Activated naive CD4-positive, alpha-beta T cell treated with anti-CD3 and anti-CD28 coated beads, Interleukin-2, amount 10 ng/mL, durations not matched to agents 7 days and 5 days (primary cell): ENCODE measurements at regions of chr21 and their contacts with region 1.

Region 1: DNA sequence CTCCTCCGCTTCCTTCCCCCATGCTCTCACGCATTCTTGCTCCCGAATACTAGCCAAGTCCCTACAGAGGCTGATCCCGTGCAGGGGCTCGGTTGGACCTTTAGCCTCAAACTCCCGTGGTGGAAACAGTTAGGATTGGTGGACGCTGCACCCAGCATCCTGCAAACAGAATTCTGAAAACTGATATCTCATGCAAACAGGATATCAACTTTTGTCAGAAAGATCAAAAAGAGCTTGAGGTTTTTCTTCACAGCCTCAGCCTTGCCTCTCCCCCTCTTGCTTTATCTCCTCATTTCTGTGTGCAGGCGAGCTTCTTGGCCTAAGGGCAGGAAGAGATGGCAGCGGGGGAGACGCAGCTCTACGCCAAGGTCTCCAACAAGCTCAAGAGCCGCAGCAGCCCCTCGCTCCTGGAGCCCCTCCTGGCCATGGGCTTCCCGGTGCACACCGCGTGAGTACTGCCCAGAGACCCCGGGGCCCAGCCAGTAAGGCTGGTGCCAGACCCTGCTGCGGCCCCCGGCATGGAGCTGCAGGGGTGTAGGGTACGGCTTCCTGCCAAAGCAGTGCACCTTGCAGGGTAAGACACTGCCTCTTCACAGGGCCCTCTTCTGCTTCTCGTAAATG is at the start of gene UBASH3A:
- DNase-seq: peak; percentile 76
- H3K4me3 Mint-ChIP-seq: peak within 1 kb of the TSS; percentile 98
- H3K27ac Mint-ChIP-seq: peak within 1 kb of the TSS; percentile 87
- H3K4me1 Mint-ChIP-seq: peaks cover 59% of the 10 kb centered on the region
- H3K27me3 Mint-ChIP-seq: no peaks in the 10 kb centered on the region

Region 2: DNA sequence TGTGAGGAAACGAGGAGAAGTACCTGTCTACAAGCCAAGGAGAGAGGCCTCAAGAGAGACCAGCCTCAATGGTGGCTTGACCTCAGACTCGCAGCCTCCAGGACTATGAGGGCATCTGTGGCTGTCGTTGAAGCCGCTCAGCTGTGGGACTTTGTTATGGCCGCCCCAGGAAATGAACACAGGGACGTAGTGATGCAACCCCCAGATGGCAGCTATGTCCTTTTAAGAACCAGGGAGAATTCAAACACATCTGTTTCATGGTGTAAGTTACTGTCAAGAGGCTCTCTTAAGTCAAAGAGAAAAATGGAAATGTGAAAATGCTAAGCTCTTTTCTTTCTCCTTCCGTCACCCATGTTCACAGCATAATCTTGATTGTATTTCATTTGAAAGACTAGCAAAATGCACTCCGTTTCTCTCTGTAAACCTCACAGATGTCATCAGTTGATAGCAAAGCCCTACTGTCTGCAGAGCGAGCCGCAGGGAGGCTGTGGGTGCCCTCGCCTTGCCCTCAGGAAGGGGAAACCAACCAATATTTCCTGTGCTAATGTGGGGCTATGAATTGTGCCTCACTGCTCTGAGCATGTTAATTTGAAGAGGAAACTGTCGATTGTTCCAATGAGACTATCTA is 21.3 kb after region 1 on chr21:
- CTCF ChIA-PET with region 1: interaction called, 13 read pairs
- DNase-seq: peak; percentile 84
- H3K4me3 Mint-ChIP-seq: peak overlapping the region; percentile 55
- H3K27ac Mint-ChIP-seq: peak overlapping the region; percentile 91
- H3K4me1 Mint-ChIP-seq: peaks cover 73% of the 10 kb centered on the region
- H3K27me3 Mint-ChIP-seq: no peaks in the 10 kb centered on the region